ENCODE measurements at regions of chr19 and their contacts with region 1.

Region 1: DNA sequence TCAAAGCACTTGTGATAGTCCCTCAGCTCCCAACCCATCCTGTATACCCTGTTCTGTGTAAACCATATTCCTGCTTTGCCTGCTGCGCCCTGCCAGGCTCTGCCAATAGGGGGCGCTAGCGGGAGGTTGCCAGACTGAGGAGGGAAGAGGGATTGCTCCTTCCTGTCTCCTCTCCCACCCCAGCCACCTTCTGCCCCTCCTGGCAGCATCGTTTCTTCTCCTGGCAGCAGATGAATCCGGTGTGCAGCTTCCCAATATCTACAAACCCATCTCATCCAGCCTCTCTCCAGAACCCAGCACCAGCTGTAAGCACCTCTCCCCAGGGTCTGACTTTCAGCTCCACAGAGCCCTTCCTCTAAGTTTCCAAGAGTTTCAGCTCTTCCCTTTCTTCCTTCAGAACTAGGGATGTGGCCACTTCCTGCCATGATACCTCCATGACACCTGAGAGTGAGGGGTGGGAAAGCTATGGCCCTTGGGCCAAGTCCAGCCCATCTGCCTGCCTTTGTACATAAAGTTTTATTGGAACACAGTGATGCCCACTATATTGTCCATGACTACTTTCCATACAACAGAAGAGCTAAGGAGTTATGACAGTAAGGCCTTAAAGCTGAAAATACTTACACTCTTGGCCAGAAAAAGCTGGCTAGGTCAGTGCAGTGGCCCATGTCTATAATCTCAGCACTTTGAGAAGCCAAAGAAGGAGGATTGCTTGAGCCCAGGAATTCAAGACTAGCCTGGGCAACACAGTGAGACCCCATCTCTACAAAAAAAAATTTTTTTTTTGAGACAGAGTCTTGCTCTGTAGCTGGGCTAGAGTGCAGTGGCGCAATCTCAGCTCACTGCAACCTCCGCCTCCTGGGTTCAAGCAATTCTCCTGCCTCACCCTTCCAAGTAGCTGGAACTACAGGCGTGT is 34.5 kb upstream of the ATP1A3 start:
- DNase-seq: no peak
- H3K4me3 ChIP-seq: no peak overlapping the region
- H3K27me3 ChIP-seq: peaks cover 3% of the 10 kb centered on the region; the same call in 1 of the 2 replicates
- CTCF ChIP-seq: peak; percentile 49

Region 2: DNA sequence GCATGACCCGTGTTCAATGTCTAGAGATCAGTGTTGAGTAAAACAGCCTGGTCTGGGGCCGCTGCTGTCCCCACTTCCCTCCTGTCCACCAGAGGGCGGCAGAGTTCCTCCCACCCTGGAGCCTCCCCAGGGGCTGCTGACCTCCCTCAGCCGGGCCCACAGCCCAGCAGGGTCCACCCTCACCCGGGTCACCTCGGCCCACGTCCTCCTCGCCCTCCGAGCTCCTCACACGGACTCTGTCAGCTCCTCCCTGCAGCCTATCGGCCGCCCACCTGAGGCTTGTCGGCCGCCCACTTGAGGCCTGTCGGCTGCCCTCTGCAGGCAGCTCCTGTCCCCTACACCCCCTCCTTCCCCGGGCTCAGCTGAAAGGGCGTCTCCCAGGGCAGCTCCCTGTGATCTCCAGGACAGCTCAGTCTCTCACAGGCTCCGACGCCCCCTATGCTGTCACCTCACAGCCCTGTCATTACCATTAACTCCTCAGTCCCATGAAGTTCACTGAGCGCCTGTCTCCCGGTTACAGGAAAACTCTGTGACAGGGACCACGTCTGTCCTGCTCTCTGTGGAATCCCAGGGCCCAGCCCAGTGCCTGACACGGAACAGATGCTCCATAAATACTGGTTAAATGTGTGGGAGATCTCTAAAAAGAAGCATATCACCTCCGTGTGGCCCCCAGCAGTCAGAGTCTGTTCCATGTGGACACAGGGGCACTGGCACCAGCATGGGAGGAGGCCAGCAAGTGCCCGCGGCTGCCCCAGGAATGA is 321.6 kb before region 1 on chr19:
- CTCF ChIA-PET with region 1: no interaction called
- POLR2A ChIA-PET with region 1: no interaction called
- DNase-seq: no peak
- H3K4me3 ChIP-seq: no peak overlapping the region
- H3K27me3 ChIP-seq: no peaks in the 10 kb centered on the region
- CTCF ChIP-seq: peak; percentile 57

Region 3: GRCh38 chr19:41959056-41960053 is 69.2 kb before region 1 on chr19 and contains the start of gene RABAC1:
- CTCF ChIA-PET with region 1: interaction called, 20 read pairs
- POLR2A ChIA-PET with region 1: no interaction called
- DNase-seq: peak; percentile 52
- H3K4me3 ChIP-seq: peak within 1 kb of the TSS; percentile 100
- H3K27me3 ChIP-seq: no peaks in the 10 kb centered on the region
- CTCF ChIP-seq: peak; percentile 36
- polyA plus RNA-seq, gene RABAC1: 302 and 361 TPM in 2 replicates

Region 4: GRCh38 chr19:41993612-41994483 is 34.7 kb before region 1 on chr19 and contains the start of gene ATP1A3:
- CTCF ChIA-PET with region 1: interaction called, 33 read pairs
- POLR2A ChIA-PET with region 1: no interaction called
- DNase-seq: no peak
- H3K4me3 ChIP-seq: peak within 1 kb of the TSS; percentile 37
- H3K27me3 ChIP-seq: peaks cover 23% of the 10 kb centered on the region
- CTCF ChIP-seq: no peak
- polyA plus RNA-seq, gene ATP1A3: 0.11 and 0.32 TPM in 2 replicates

Region 5: DNA sequence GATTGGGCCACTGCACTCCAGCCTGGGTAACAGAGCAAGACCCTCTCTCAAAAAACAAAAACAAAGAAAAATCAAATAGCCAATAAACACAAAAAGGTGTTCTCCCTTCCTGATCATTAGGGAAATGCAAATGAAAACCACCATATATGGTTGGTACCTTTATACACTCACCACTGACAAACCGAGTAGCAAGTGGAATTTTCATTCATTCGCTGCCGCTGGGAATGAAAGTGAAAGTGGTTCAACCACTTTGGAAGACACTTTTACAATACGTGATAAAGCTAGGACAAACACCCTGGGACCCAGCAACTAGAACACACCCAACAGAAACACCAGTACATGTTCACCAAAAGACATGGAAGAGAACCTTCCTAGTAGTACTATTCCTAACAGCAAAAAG is 20.4 kb after region 1 on chr19:
- CTCF ChIA-PET with region 1: interaction called, 36 read pairs
- POLR2A ChIA-PET with region 1: no interaction called
- DNase-seq: no peak
- H3K4me3 ChIP-seq: no peak overlapping the region
- H3K27me3 ChIP-seq: peaks cover 5% of the 10 kb centered on the region
- CTCF ChIP-seq: no peak

Measured in BJ (cell line).